Activated CD4-positive, alpha-beta memory T cell treated with anti-CD3 and anti-CD28 coated beads, Interleukin-2, amount 10 ng/mL, durations not matched to agents 7 days and 5 days (primary cell): ENCODE measurements at regions of chr20 and their contacts with region 1.

Region 1: DNA sequence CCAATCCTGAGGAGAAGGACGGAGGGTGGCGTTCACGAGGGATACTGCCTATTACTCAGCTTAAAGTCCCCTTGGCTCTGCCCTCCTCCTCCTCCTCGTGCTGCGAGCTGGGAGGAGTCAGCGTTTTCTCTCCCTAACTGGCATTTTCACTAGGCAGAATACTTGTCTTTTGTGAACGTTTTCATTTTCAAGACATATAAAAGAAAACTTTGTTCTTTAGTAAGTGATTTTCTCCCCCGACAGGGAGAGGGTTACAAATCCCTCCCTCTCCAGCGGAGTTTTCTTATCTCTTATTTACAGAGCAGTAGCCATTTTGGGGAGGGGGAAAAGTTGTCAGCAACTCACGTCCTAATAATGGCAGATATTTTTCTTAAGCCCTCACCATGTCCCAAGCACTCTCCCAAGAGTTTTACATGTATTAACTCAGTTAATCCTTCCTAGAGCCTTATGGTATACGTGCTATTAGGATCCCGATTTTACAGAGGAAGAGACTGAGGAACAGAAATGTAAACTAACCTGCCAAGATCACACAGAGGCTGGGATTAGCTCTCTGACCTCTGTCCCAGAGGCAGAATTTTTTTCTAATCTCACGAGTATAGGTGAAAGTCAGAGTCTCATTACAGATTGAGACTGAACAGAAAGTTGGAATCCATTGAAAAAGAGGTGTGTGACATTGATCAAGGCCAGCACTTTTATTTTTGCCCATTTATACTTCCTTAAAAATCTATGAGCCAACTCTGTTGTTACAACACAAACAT is 30.0 kb upstream of the ZNF217 start:
- DNase-seq: peak; percentile 51
- H3K4me3 Mint-ChIP-seq: peak overlapping the region; percentile 60
- H3K27ac Mint-ChIP-seq: peak overlapping the region; percentile 96
- H3K4me1 Mint-ChIP-seq: peaks cover 39% of the 10 kb centered on the region
- H3K27me3 Mint-ChIP-seq: no peaks in the 10 kb centered on the region

Region 2: DNA sequence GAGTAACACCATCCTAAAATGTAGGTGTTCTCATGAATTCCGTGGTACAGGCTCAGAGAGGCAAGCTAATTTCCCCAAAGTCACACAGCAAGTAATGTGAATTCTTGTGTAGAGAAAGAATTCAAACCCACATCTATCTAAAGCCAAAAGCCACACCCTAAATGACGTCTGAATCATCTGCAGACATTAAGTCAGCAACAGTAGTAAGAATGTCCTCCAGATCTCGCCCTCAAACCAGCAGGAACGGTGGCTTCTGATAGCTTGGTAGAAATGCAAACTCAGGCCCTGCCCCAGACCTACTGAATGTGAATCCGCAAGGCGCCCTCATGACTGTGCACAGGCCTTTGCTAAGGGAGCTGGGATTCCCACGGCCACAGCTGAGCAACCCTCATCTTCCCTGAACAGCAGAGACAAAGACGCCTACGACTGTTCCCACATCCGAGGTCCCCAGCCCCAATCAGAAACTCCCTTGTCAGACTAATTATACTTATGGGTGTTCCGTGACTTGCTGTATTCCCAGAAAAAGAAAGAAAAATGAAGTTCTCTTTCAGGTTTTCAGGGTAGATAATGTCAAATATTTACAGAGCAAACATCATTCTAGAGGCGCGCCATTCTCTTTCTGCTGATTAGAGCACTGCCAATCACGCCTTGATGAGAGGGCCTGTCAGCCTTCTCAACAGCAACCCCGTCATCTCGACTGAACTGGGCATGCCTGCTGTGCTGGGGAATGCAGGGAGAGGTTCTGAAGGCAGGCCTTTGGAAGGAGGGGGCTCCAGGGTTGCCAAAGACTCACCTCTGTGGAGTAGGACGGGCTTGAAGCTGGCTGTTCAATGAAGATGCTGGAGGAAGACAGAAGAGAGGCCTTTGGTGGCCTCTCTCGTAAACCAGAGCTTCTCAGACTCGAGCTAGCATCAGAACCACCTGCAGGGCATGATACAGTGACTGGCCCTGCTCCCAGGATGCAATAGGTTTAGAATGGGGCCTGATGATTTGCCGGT is 110.0 kb before region 1 on chr20:
- CTCF ChIA-PET with region 1: no interaction called
- POLR2A ChIA-PET with region 1: no interaction called
- DNase-seq: no peak
- H3K4me3 Mint-ChIP-seq: no peak overlapping the region
- H3K27ac Mint-ChIP-seq: no peak overlapping the region
- H3K4me1 Mint-ChIP-seq: no peaks in the 10 kb centered on the region
- H3K27me3 Mint-ChIP-seq: no peaks in the 10 kb centered on the region

Region 3: DNA sequence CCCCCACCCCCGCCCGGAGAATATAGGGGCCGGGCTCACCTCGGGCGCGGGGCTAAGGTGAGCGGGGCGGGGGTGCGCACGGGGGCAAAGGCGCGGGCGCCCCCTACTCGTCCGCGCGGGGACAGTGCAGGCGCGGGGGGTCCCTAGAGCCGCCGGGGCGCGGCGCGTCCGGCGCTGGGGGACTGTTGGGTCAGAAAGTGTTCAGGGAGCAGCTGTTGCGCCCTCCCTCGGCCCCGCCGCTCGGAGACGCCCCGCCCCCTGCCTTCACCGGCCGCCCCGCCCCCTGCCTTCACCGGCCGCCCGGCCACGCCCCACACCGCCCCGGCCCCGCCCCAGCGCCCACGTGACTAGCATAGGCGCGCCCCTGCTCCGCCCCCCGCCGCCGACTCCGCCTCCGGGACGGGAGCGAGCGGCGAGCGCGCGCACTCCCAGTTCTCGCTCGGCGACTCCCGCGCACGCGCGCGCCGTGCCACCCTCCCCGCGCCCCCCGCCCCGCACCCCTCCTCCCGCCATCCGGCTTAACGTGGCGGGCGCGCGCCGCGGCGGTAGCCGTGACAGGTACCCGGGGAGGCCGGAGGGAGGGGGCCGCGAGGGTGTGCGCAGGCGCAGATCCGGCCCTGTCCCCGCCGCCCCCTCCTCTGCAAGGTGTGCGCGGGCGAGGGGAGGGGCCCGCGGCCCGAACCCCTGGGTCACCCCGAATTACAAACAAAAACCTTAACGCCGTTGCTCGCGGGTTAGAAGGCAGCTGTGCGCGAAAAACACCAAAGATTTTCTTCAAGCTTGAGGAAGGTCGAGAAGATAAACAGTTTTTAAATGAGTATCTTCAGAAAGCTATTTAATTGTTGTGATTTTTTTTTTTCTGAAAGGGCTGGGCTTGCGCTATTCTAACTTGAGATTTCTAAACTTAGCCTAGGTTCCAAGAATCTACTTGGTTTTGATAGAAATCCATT is 29.3 kb before region 1 on chr20:
- CTCF ChIA-PET with region 1: interaction called, 13 read pairs
- POLR2A ChIA-PET with region 1: interaction called, 66 read pairs
- DNase-seq: peak; percentile 97
- H3K4me3 Mint-ChIP-seq: peak overlapping the region; percentile 99
- H3K27ac Mint-ChIP-seq: peak overlapping the region; percentile 95
- H3K4me1 Mint-ChIP-seq: peaks cover 44% of the 10 kb centered on the region
- H3K27me3 Mint-ChIP-seq: no peaks in the 10 kb centered on the region

Region 4: DNA sequence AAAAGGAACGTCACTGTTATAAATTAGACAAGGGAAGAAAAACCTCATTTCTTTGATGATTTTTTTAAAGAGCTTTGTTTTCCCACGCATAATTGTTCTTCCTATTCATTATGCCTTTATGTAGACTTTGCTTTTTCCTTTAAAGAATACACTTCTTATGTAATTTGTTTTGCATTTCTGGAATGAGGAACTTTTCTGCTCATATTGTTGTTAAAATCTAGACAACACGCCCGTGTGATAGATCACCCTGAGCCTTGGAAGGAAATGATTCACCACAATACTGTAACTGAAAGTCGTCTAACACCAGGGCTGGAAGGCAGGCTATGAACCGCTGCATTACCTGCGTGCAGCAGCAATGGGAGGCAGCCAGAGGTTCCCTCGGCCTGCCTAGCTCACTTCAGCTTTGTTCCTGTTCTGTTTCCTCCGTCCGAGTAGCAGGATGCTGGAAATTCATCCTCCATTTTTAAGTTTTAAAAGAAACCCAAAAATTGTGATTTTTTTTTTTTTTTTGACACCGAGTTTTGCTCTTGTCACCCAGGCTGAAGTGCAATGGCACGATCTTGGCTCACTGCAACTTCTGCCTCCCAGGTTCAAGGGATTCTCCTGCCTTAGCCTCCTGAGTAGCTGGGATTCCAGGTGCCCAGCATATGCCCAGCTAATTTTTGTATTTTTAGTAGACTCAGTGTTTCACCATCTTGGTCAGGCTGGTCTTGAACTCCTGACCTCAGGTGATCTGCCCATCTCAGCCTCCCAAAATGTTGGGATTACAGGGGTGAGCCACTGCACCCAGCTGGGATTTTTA is 19.6 kb after region 1 on chr20:
- CTCF ChIA-PET with region 1: interaction called, 8 read pairs
- POLR2A ChIA-PET with region 1: interaction called, 56 read pairs
- DNase-seq: peak; percentile 71
- H3K4me3 Mint-ChIP-seq: peak overlapping the region; percentile 57
- H3K27ac Mint-ChIP-seq: peak overlapping the region; percentile 90
- H3K4me1 Mint-ChIP-seq: peaks cover 33% of the 10 kb centered on the region
- H3K27me3 Mint-ChIP-seq: no peaks in the 10 kb centered on the region

Region 5: GRCh38 chr20:53660078-53660909 is 36.7 kb after region 1 on chr20:
- CTCF ChIA-PET with region 1: interaction called, 3 read pairs
- POLR2A ChIA-PET with region 1: interaction called, 15 read pairs
- DNase-seq: peak; percentile 45
- H3K4me3 Mint-ChIP-seq: peak overlapping the region; percentile 77
- H3K27ac Mint-ChIP-seq: peak overlapping the region; percentile 84
- H3K4me1 Mint-ChIP-seq: peaks cover 54% of the 10 kb centered on the region
- H3K27me3 Mint-ChIP-seq: no peaks in the 10 kb centered on the region